HEK293 (cell line): ENCODE measurements at regions of chr11 and their contacts with region 1.

Region 1: GRCh38 chr11:73295231-73295995 is 12.7 kb upstream of the ARHGEF17 start:
- H3K4me3 ChIP-seq: no peak overlapping the region
- H3K27ac ChIP-seq: no peak overlapping the region
- H3K4me1 ChIP-seq: no peaks in the 10 kb centered on the region
- CTCF ChIP-seq: no peak

Region 2: GRCh38 chr11:72736452-72737069 is 558.9 kb before region 1 on chr11:
- CTCF ChIA-PET with region 1: no interaction called
- POLR2A ChIA-PET with region 1: no interaction called
- H3K4me3 ChIP-seq: no peak overlapping the region
- H3K27ac ChIP-seq: no peak overlapping the region
- H3K4me1 ChIP-seq: no peaks in the 10 kb centered on the region
- CTCF ChIP-seq: no peak

Region 3: DNA sequence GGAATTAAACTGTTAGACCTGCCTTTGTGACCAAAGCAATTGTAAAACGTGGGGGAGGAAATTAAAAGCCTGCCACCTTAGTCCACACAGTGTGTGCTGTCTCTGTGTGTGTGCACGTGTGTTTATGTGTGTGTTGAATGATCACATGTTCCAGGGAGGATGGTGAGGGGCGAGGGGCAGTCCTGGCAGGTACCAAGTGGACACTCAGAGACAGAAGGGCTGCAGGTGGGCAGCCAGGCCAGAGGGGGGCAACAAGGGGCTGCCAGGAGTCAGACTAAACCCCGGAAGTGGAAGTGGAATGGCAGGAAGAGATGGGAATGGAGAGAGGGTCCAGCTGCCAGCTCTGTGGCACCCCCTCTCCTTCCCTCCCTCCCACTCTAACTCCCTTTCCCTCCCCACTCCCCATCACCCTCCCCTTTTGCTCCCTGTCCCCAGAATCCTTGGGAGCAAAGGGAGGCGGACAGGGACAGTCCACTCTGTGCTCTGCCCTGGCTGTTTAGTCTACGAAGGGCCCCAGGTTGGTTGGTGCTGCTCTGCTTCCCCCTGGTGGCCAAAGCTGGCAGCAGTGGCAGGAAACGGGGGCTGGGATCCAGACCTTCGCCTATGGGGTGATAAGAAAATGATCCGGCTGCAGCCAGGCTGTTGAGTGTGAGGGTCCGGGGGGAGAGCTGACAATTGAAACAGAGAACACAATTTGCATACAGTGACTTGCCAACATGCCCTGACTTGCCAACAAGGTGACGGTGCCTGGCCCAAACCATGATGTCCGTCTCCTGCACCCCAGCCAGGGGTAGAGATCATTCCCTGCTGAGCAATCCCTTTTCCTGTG is 52.9 kb before region 1 on chr11:
- CTCF ChIA-PET with region 1: interaction called, 11 read pairs
- POLR2A ChIA-PET with region 1: no interaction called
- H3K4me3 ChIP-seq: peak overlapping the region; percentile 27
- H3K27ac ChIP-seq: no peak overlapping the region; the same call in 1 of the 2 replicates
- H3K4me1 ChIP-seq: no peaks in the 10 kb centered on the region
- CTCF ChIP-seq: no peak; the same call in 1 of the 2 replicates